ENCODE measurements at regions of chr3 and their contacts with region 1.

Region 1: GRCh38 chr3:66253790-66254620 is 33.2 kb downstream of the SLC25A26 start:
- DNase-seq: no peak
- H3K4me3 ChIP-seq: no peak overlapping the region
- H3K27ac ChIP-seq: no peak overlapping the region
- H3K27me3 ChIP-seq: no peaks in the 10 kb centered on the region
- CTCF ChIP-seq: peak; percentile 69 to 98 (median 88)

Region 2: GRCh38 chr3:66816090-66816761 is 562.2 kb after region 1 on chr3:
- intact Hi-C with region 1: loop called (anchors 5 to 10 kb)
- DNase-seq: no peak
- H3K4me3 ChIP-seq: no peak overlapping the region
- H3K27ac ChIP-seq: no peak overlapping the region
- H3K27me3 ChIP-seq: no peaks in the 10 kb centered on the region
- CTCF ChIP-seq: peak; percentile 51 to 90 (median 76)

Region 3: GRCh38 chr3:66822186-66823008 is 568.4 kb after region 1 on chr3:
- intact Hi-C with region 1: loop called (anchors 5 to 10 kb)
- DNase-seq: peak in 5 of 10 donors; percentile 35 to 60 (median 48)
- H3K4me3 ChIP-seq: no peak overlapping the region
- H3K27ac ChIP-seq: no peak overlapping the region
- H3K27me3 ChIP-seq: no peaks in the 10 kb centered on the region
- CTCF ChIP-seq: peak; percentile 33 to 77 (median 62)

Region 4: GRCh38 chr3:66836363-66837152 is 582.6 kb after region 1 on chr3:
- intact Hi-C with region 1: loop called in 1 of 2 experiments (anchors 5 kb)
- DNase-seq: no peak
- H3K4me3 ChIP-seq: no peak overlapping the region
- H3K27ac ChIP-seq: no peak overlapping the region
- H3K27me3 ChIP-seq: no peaks in the 10 kb centered on the region
- CTCF ChIP-seq: peak in 52 of 56 donors; percentile 17 to 80 (median 55)